Aorta (tissue), 5 donors: ENCODE measurements at regions of chr14 and their contacts with region 1.

Region 1: DNA sequence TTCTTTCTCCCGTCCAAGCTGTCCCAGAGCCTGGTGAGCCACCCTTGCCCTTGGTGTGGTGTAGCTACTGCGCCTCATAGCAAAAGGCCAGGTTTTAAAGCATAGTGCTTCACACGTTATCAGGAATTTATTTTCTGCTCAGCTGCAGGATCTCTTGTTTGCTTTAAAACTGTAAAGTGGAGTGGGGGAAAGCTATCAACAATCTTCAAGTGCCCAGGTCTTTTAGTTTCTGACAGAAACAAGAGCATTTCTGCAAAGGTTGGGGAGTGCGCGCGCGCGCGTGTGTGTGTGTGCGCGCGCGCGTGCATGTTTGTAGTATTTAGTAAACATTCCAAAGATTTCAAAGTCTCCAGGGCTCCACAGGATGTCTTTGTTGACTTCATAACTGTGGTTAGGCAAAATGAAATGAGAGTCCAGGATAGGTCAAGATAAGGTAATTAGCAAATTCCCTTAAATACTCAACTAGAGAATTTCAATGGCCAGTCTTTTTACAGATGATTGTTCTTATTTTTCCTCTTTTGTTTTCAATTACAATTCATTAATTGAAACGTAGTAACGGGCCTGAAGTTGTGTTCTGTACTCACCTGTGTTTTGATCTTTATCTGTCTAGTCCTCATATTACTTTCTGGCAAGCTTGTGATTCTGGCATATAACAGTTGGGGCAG is 45.6 kb downstream of the EML1 start:
- DNase-seq: no peak
- ATAC-seq: no peak
- H3K4me3 ChIP-seq: no peak overlapping the region
- H3K27ac ChIP-seq: no peak overlapping the region
- H3K4me1 ChIP-seq: peaks cover 0 to 4% of the 10 kb centered on the region in 2 donors
- H3K27me3 ChIP-seq: no peaks in the 10 kb centered on the region

Region 2: DNA sequence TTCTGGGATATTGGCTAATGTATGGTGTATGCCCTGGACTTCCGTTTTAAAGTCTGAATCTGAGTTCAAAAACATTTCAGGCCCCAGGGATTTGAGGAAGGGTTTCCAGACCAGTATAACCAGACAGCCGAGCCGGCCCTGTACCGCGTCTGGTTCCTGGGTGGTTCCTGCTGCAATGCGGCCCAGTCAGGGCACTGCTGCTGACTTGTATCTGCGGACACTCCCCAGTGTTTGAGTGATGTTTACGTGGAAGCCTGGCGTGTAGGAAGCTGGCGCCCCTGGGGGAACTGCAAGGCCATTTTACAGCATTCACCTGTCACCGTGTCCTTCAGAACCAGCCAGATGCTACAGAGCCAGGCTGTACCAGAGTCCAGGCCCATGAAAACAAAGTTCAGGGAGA is 28.9 kb before region 1 on chr14:
- intact Hi-C with region 1: loop called in 1 of 2 experiments (anchors 2 kb)
- DNase-seq: no peak
- ATAC-seq: peak; percentile 39
- H3K4me3 ChIP-seq: no peak overlapping the region
- H3K27ac ChIP-seq: no peak overlapping the region
- H3K4me1 ChIP-seq: no peaks in the 10 kb centered on the region
- H3K27me3 ChIP-seq: no peaks in the 10 kb centered on the region